HepG2 (cell line): ENCODE measurements at regions of chr9 and their contacts with region 1.

Region 1: DNA sequence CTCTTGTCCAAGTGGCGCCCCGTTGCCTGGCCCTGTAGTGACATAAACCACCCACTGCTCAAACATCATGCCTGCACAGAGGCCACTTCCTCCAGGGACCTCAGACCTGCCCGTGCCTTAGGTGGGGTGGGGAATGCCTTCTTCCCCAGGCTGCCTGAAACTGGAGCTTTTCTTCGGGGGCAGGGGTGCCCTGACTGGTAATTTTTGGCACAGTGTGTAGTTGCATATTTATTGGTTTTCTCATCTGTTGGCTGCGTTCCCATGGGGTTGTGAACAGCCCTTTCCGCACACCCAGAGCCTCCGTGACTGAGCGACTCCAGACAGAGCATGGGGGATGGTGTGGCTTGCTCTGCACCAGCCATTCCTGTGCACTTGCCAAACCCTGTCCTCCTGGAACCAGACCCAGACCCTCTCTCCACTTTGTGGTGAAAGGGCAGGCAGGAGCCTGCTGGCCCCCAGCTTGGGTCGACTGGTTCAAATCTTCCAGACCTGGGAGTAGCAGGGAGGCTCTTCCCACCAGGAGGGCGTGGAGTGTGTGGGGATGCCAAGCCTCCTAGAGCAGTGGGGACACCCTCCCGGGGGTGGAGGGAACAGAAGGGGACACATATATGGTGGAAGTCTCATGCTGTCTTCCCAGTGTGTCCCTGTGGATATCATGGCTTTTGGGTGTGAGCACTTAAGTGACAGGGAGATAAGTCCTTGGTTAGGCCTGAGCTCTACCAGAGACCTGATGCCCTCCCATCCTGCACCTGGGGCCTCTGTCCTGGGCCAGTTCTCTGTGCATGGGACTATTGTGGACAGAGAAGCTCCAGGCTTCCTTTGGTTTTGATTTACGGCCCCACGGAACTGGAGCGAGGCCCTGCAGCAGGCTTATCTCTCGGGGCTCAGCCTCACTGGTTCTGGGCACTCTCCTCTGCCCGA is 39.6 kb downstream of the WNK2 start:
- DNase-seq: no peak
- ATAC-seq: no peak
- H3K4me3 ChIP-seq: no peak overlapping the region
- H3K27ac ChIP-seq: no peak overlapping the region
- H3K4me1 ChIP-seq: peaks cover 22% of the 10 kb centered on the region
- H3K27me3 ChIP-seq: no peaks in the 10 kb centered on the region
- CTCF ChIP-seq: no peak
- EP300 ChIP-seq: no peak
- POLR2A ChIP-seq: no peak
- RAD21 ChIP-seq: no peak

Region 2: DNA sequence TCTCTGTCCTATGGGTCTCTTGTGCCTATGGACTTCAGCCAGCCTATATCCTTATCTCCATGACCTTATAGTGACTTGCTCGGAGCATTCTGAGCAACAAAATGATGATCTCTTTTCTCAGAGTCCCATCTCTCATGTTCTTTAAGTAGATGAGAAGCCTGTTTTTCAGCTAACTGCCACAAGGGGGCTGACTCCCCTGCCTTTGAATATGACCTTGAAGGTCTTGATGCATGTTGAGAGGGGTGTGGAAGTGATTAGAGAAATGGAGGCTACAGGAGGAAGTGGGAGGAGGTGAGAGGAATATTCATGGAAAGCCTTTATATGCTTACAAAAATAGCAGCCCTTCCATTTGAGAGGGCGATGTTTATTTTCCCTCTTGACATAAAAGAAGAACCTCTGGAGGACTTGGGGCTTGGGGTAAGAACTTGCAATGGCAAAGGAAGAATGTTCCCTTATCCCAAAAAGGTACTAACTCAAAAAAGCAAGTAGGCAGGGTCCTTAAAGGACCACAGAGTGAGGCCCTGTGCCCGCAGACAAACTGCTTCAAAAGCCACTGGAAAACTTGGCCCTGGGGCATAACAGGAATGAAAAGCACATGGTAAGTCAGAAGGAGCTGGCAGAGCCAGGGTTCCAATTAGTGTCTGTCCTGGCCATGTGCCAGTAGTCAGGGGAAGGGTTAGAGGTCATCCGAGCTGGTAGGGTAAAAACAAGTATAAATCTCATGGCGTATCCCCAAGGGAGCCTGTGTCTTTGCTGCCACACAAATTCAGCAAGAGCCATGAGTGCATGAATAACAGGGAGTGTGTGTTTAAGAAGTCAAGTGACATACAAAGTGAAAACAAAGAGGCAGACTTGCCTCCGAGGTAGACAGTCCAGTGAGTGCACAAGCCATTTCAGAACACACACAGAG is 237.1 kb before region 1 on chr9:
- CTCF ChIA-PET with region 1: no interaction called
- POLR2A ChIA-PET with region 1: no interaction called
- in situ Hi-C with region 1: no loop called
- intact Hi-C with region 1: no loop called
- DNase-seq: no peak
- ATAC-seq: no peak
- H3K4me3 ChIP-seq: no peak overlapping the region
- H3K27ac ChIP-seq: no peak overlapping the region
- H3K4me1 ChIP-seq: peaks cover 28% of the 10 kb centered on the region
- H3K27me3 ChIP-seq: no peaks in the 10 kb centered on the region
- CTCF ChIP-seq: no peak
- EP300 ChIP-seq: no peak
- POLR2A ChIP-seq: no peak
- RAD21 ChIP-seq: no peak

Region 3: GRCh38 chr9:93276968-93277367 is 53.4 kb after region 1 on chr9:
- CTCF ChIA-PET with region 1: no interaction called
- POLR2A ChIA-PET with region 1: no interaction called
- in situ Hi-C with region 1: no loop called
- intact Hi-C with region 1: loop called (anchors 2 kb)
- DNase-seq: no peak
- ATAC-seq: peak; percentile 44; the same call in 2 of the 3 replicates
- H3K4me3 ChIP-seq: no peak overlapping the region
- H3K27ac ChIP-seq: no peak overlapping the region
- H3K4me1 ChIP-seq: no peaks in the 10 kb centered on the region
- H3K27me3 ChIP-seq: no peaks in the 10 kb centered on the region
- CTCF ChIP-seq: peak; percentile 54
- EP300 ChIP-seq: no peak
- POLR2A ChIP-seq: no peak
- RAD21 ChIP-seq: peak; percentile 72